Endothelial cell of umbilical vein (primary cell): ENCODE measurements at regions of chr17 and their contacts with region 1.

Region 1: DNA sequence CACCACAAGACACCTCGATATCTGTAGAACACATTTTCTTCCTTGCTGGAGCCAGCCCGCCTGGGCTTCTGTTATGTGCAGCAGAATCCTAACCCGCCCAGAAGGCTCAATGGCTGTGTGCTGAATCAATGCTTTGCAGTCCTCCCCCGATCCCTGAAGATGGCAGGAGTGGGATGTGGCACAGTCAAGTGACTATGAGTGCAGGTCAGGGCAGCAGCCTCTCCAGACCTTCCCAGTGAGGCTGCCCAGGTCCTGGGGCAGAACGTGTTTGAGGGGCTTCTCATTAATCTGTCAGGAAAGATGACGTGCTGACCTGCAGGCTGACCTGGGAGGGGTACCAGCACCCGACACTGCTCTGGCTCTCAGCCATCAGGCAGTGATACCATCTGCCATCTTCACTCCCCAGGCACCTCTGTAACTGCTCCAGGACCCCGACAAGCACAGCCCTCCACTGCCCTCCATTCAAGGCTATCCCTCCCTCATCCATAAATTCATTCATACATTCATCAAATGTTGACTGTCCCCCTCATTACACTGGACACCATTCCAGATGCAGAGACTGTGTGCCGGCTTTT is 35.2 kb downstream of the LRRC75A start:
- DNase-seq: no peak
- H3K4me3 ChIP-seq: no peak overlapping the region
- H3K27ac ChIP-seq: no peak overlapping the region
- H3K4me1 ChIP-seq: peaks cover 10% of the 10 kb centered on the region
- H3K27me3 ChIP-seq: no peaks in the 10 kb centered on the region
- CTCF ChIP-seq: no peak
- POLR2A ChIP-seq: no peak

Region 2: GRCh38 chr17:16363749-16364536 is 92.9 kb before region 1 on chr17:
- CTCF ChIA-PET with region 1: interaction called, 24 read pairs
- POLR2A ChIA-PET with region 1: no interaction called
- dilution Hi-C with region 1: no loop called
- intact Hi-C with region 1: loop called (anchors 2 kb)
- DNase-seq: peak; percentile 70
- H3K4me3 ChIP-seq: no peak overlapping the region
- H3K27ac ChIP-seq: no peak overlapping the region
- H3K4me1 ChIP-seq: no peaks in the 10 kb centered on the region
- H3K27me3 ChIP-seq: no peaks in the 10 kb centered on the region
- CTCF ChIP-seq: peak; percentile 85 to 92
- POLR2A ChIP-seq: no peak

Region 3: DNA sequence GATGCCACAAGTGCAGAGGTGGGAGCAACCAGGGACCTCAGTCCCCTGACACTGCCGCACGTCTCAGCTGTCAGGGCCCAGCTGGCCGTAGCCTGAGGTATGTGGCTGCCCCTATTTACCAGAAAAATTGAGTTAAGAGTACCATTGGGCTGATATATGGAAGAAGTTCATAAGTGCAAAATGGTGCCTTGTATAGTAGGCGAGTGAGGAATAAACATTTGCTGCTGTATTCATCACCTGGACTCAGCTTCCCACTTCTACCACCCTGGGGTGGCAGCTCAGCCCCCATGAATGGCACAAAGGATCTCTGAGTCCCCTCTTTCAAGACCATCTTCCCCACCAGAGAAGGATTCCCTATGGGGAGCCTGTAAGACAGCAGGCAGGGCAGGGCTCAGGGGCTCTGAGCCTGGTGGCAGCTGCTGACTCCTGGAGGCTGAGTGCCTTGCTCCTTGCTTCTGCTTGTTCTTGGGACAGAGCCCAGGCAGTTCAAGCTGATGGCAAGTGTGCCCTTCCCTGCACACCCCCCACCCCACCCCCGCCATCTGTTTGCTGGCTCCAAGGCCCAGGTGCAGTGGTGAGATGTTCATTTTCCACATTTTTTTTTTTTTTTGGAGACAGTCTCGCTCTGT is 12.5 kb before region 1 on chr17:
- CTCF ChIA-PET with region 1: interaction called, 29 read pairs
- POLR2A ChIA-PET with region 1: interaction called, 14 read pairs
- dilution Hi-C with region 1: no loop called
- intact Hi-C with region 1: no loop called
- DNase-seq: no peak
- H3K4me3 ChIP-seq: no peak overlapping the region
- H3K27ac ChIP-seq: no peak overlapping the region
- H3K4me1 ChIP-seq: peaks cover 31% of the 10 kb centered on the region
- H3K27me3 ChIP-seq: no peaks in the 10 kb centered on the region
- CTCF ChIP-seq: no peak
- POLR2A ChIP-seq: peak; percentile 8

Region 4: DNA sequence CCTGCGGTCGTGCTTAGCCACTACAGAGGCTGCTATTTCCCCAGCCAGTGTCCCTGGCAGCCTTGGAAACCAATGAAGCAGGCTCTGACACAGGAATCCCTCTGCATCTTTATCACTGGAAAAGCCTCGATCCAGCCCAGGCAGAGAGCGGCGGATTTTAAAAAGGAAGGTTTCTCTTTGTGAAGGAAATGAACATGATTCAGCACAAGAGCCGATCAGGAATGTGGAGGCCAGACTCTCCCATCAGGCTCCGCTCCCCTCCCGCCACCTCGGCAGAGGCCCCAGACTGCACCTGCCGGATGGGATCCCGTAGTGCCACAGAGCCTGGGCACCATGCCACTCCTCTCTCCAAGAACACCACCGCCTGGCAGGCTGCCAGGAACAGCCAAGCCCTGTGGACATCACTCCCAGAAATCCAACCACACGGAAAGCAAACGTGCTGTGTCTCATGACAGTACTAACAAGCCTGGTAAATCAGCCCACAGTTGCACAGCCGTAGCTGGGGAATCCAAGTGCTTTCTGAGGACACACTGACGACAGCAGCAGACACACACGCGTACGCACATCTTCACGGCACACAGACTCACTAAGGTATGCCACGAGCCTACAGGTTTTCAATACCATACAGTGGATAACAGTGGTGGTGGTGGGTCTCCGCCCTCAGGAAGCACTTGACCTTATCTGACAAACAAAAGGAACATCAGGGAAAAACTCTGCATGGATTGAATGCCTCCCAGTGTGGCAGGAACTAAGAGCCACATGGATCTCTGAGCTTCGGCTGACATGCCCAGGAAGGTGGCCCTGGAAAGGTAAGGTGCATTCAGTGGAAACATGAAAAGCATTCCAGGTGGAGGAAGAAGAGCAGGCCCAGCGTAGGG is 29.8 kb after region 1 on chr17:
- CTCF ChIA-PET with region 1: interaction called, 20 read pairs
- POLR2A ChIA-PET with region 1: no interaction called
- dilution Hi-C with region 1: no loop called
- intact Hi-C with region 1: loop called (anchors 1 kb)
- DNase-seq: peak; percentile 83
- H3K4me3 ChIP-seq: peak overlapping the region in 2 of 3 experiments; percentile 5 to 9
- H3K27ac ChIP-seq: peak overlapping the region; percentile 80
- H3K4me1 ChIP-seq: peaks cover 41% of the 10 kb centered on the region
- H3K27me3 ChIP-seq: peaks cover 0 to 6% of the 10 kb centered on the region in 2 experiments
- CTCF ChIP-seq: no peak
- POLR2A ChIP-seq: peak; percentile 52

Region 5: DNA sequence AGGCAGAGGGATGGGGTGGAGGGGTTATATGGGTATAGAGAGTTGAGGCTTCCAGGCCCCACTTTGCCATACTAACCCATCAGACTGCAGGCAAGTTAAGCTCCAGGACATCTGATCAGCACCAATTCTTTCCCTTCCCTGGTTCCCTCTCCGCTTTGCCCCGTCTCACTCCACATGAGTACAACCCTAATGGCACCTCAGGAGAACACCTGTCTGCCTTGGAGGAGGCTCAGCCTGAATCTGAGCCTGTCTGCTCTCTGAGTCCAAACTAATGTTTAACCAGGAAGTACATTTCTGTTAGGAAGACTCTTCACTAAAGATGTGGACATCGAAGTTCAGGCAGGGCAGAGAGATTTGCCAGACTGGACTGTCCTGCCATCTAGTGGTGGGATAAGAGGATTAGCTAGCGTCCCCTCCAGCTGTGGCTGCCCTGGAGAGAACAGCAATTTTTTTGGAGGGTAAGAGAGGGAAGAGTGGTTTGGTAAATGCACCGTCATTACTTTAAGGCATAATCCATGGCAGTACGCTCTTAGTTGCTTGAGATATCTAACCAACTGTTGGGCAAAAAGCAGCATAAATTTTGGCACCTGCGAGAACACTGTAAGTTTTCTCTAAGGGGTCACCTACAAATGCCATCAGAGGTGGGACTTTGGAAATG is 64.4 kb after region 1 on chr17:
- CTCF ChIA-PET with region 1: interaction called, 440 read pairs
- POLR2A ChIA-PET with region 1: interaction called, 7 read pairs
- dilution Hi-C with region 1: no loop called
- intact Hi-C with region 1: loop called (anchors 1 kb)
- DNase-seq: peak; percentile 79
- H3K4me3 ChIP-seq: no peak overlapping the region
- H3K27ac ChIP-seq: peak overlapping the region; percentile 31
- H3K4me1 ChIP-seq: peaks cover 13% of the 10 kb centered on the region
- H3K27me3 ChIP-seq: peaks cover 0 to 2% of the 10 kb centered on the region in 2 experiments
- CTCF ChIP-seq: peak; percentile 80 to 85
- POLR2A ChIP-seq: no peak

Region 6: GRCh38 chr17:16589097-16589969 is 132.5 kb after region 1 on chr17:
- CTCF ChIA-PET with region 1: interaction called, 12 read pairs
- POLR2A ChIA-PET with region 1: no interaction called
- dilution Hi-C with region 1: no loop called
- intact Hi-C with region 1: loop called (anchors 1 kb)
- DNase-seq: peak; percentile 87
- H3K4me3 ChIP-seq: peak overlapping the region; percentile 34 to 50 (median 35)
- H3K27ac ChIP-seq: no peak overlapping the region
- H3K4me1 ChIP-seq: peaks cover 4% of the 10 kb centered on the region
- H3K27me3 ChIP-seq: peaks cover 23 to 31% of the 10 kb centered on the region in 2 experiments
- CTCF ChIP-seq: peak; percentile 96 to 100
- POLR2A ChIP-seq: no peak

Region 7: DNA sequence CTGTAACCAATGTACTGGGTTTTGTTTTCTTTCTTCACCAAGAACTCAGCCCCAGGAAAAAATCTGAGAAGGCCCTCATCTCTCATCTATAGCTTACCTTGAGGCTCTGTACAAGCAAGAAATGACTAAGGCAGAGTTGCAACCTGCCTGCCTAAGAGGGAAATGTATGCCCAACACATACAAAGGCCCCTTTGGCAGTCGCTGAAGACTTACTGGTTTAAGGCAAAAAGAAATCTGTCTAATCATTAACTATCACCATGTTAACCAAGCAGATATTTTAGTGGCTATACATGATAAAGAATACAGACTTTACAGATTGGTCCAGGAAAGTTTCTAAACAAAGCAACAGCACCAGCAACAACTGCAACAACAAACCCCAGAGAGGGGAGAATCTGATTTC is 182.6 kb after region 1 on chr17:
- CTCF ChIA-PET with region 1: no interaction called
- POLR2A ChIA-PET with region 1: no interaction called
- dilution Hi-C with region 1: no loop called
- intact Hi-C with region 1: no loop called
- DNase-seq: no peak
- H3K4me3 ChIP-seq: no peak overlapping the region
- H3K27ac ChIP-seq: no peak overlapping the region
- H3K4me1 ChIP-seq: no peaks in the 10 kb centered on the region
- H3K27me3 ChIP-seq: no peaks in the 10 kb centered on the region
- CTCF ChIP-seq: no peak
- POLR2A ChIP-seq: no peak